ENCODE measurements at regions of chr12 and their contacts with region 1.

Region 1: DNA sequence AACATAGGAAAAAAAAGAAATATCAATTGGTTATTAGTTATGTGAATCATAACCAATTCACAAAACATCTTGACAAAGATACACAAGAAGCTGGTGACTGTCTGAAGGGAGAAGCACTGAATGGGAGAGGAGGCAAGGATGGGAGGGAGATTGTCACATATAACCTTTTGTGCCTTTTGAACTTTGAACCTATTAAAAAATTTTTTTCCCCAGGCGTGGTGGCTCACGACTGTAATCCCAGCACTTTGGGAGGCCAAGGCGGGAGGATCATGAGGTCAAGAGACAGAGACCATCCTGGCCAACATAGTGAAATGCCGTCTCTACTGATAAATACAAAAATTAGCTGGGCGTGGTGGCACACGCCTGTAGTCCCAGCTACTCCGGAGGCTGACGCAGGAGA is 12.6 kb downstream of the DYNLL1 start:
- DNase-seq: no peak
- CTCF ChIP-seq: no peak

Region 2: DNA sequence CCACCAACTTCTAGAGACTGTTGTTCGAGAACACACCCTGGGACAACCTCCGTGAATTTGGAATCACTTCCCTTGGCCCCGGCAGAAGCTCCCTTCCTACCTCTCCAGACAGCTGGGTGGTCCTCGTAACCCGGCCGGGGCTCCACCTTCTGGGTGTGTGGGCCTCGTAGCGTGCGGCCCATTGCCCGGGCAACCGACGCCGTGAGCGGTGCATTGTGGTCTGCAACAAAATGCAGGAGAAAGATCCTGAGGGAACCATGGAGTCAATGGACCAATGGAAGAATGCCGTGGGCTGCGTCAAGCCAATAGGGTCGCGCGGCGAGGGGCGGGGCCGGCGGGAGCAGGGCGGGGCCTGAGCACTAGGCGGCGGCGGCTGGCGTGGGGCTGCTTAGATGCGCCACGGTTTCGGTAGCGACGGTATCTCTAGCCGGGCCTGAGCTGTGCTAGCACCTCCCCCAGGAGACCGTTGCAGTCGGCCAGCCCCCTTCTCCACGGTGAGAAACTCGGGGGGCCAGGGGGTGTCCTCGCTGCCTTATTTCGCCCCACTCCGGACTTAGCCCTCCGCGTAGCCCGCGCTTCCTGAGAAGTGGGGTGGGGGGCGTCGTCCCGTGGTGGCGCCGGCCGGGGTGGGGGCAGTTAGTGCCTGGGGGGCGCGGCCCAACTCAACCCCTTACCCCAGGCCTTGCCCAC is 12.7 kb before region 1 on chr12 and contains the start of gene DYNLL1:
- CTCF ChIA-PET with region 1: interaction called, 5 read pairs
- POLR2A ChIA-PET with region 1: interaction called, 10 read pairs
- DNase-seq: peak; percentile 98
- CTCF ChIP-seq: peak; percentile 6